ENCODE measurements at regions of chr5 and their contacts with region 1.

Region 1: GRCh38 chr5:68478301-68479095 is 262.9 kb downstream of the PIK3R1 start:
- DNase-seq: no peak
- H3K4me3 ChIP-seq: no peak overlapping the region
- H3K27ac ChIP-seq: no peak overlapping the region
- H3K4me1 ChIP-seq: no peaks in the 10 kb centered on the region
- H3K27me3 ChIP-seq: no peaks in the 10 kb centered on the region
- CTCF ChIP-seq: no peak

Region 2: DNA sequence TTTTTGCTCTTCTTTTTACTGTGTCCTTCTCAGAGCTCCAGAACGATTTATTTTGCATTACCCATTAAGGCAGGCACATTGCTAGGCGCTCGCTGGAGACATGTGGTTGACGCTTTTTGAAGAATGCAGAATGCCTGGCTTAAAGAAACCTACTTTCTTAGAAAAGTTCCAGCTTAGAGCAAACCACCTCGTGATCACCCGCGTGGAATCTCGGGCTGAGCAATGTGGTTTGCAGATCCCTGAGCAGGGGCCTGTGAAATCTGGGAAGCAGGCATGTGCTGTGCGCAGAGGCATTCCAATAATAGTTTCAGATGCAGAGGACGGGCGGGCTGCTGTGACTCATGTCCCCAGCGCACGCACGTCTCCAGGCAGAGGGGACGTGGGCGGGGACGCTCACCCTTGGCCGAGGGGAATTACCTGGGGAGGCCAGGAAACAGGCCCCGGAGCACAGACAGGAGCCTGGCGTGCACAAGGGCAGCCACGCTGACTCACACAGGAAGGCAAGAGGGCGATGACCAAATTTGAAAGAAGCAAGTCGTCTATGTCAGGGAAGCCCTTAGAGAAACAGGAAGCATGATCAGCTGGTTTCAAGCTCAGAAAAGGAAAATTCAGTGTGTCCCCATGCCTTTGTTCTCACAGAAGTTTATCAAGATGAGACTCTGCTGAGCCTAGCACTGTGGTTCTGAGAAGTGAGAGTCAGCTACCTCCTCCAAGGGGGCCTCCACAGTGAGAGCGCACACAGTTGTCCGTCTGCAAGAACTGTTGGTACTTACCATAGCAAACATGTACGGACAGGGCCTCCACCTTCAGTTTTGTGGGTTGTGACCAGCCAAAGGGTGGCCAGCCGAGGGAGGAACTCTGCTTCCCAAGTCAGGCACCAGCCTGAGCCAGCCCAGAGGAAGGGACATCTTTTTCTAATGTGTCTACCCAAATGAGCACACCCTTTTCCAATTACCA is 44.3 kb before region 1 on chr5:
- CTCF ChIA-PET with region 1: no interaction called
- dilution Hi-C with region 1: no loop called
- in situ Hi-C with region 1: no loop called
- intact Hi-C with region 1: no loop called
- DNase-seq: peak; percentile 100
- H3K4me3 ChIP-seq: no peak overlapping the region
- H3K27ac ChIP-seq: peak overlapping the region; percentile 90
- H3K4me1 ChIP-seq: peaks cover 45% of the 10 kb centered on the region
- H3K27me3 ChIP-seq: no peaks in the 10 kb centered on the region
- CTCF ChIP-seq: no peak

Region 3: GRCh38 chr5:68652534-68652965 is 174.1 kb after region 1 on chr5:
- CTCF ChIA-PET with region 1: no interaction called
- dilution Hi-C with region 1: no loop called
- in situ Hi-C with region 1: no loop called
- intact Hi-C with region 1: loop called (anchors 10 kb)
- DNase-seq: peak; percentile 51
- H3K4me3 ChIP-seq: no peak overlapping the region
- H3K27ac ChIP-seq: no peak overlapping the region
- H3K4me1 ChIP-seq: no peaks in the 10 kb centered on the region
- H3K27me3 ChIP-seq: no peaks in the 10 kb centered on the region
- CTCF ChIP-seq: no peak

Measured in mammary epithelial cell (primary cell).